Mammary epithelial cell (primary cell): ENCODE measurements at regions of chr6 and their contacts with region 1.

Region 1: DNA sequence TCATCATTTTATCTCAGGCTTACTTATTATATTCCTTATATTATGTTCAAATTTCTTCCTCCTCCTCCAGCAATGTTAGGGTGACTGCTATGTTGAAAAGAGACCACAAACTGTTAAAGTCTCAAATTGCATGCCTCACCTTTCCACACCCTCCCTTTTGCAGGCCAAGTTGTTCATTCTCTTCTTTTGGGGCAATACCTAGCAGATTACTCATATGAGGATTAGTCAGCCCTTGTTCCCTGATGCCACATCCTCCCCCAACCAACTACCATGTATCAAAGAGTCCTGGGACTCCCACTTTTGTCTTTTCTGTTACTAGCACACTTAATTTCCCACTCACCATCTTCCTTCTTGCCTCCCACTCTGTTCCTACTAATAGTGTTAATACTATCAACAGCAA is 434.7 kb downstream of the BCKDHB start:
- DNase-seq: peak; percentile 93
- H3K4me3 ChIP-seq: no peak overlapping the region
- H3K27ac ChIP-seq: peak overlapping the region; percentile 94
- H3K4me1 ChIP-seq: peaks cover 28% of the 10 kb centered on the region
- H3K27me3 ChIP-seq: no peaks in the 10 kb centered on the region
- CTCF ChIP-seq: no peak

Region 2: DNA sequence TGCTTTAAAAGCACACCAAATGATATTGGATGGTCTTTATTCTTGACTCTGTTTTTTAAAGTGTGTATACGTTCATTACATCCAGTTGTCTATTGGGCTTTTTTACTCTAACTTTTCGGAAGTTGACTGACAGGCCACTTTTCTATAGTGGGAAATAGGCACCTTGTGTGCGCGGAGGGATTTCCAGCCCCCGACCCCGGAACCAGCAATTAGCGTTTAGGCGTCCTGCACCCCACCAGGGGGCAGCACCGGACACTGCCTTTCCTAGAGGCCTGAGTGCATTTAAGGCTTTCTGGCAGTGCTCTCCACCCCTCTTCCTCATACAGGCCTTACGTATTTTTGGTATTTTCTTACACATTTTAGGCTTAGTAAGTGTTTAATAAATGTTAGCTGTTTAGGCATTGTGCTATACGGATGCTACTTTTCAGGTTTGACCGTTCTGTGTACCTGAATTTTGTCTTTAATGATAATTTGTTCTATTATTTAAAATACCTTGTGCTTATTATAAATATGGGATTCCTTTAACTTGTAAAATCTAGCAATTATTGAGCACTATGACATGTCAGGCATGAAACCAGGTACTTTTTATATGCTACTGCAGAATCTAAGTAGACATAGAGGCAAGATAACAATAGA is 202.9 kb before region 1 on chr6:
- CTCF ChIA-PET with region 1: no interaction called
- dilution Hi-C with region 1: no loop called
- in situ Hi-C with region 1: no loop called
- intact Hi-C with region 1: loop called (anchors 5 kb)
- DNase-seq: peak; percentile 29
- H3K4me3 ChIP-seq: no peak overlapping the region
- H3K27ac ChIP-seq: no peak overlapping the region
- H3K4me1 ChIP-seq: no peaks in the 10 kb centered on the region
- H3K27me3 ChIP-seq: no peaks in the 10 kb centered on the region
- CTCF ChIP-seq: peak; percentile 76 to 92

Region 3: DNA sequence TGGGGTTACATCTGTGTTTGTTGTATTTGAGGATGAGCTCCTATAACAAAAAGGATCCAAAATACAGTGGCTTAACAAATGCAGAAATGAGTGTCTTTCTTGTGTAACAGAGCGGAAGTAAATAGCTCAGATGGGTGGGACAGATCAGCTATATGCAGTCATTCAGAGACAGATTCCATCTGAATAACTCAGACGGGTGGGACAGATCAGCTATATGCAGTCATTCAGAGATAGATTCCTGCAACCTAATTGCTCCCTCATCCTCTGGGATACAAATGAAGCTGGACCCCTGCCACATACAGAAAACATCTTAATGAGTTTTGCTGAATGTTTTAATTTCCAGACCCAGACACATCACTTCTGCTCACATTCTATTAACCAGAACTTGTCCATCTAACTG is 102.4 kb before region 1 on chr6:
- CTCF ChIA-PET with region 1: no interaction called
- dilution Hi-C with region 1: no loop called
- in situ Hi-C with region 1: no loop called
- intact Hi-C with region 1: loop called (anchors 5 kb)
- DNase-seq: peak; percentile 83
- H3K4me3 ChIP-seq: no peak overlapping the region
- H3K27ac ChIP-seq: peak overlapping the region; percentile 97
- H3K4me1 ChIP-seq: peaks cover 26% of the 10 kb centered on the region
- H3K27me3 ChIP-seq: no peaks in the 10 kb centered on the region
- CTCF ChIP-seq: no peak

Region 4: DNA sequence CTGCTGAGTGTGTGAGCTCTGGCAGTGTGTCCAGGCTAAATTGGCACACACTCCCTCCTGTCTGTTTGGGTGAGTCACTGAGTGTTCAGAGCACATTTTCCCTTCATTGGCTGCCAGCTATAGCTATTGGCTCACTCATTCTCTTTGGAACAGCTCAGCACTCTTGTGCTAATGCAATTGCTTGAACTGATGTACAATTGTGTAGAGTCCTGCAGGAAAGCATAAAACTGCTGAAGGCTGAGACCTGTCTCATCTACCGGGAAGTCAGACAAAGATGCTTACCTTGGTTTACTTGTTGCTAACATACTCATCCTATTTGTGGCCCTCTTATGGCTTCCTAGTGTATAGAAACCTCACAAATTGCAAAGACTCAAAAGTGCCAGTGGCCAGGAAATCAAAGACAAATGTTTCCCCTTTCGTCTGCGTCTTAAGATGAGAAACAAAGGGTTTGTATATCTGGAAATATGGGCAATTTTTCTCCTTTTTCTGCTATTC is 83.7 kb before region 1 on chr6:
- CTCF ChIA-PET with region 1: no interaction called
- dilution Hi-C with region 1: loop called (anchors 5 kb)
- in situ Hi-C with region 1: no loop called
- intact Hi-C with region 1: no loop called
- DNase-seq: peak; percentile 94
- H3K4me3 ChIP-seq: no peak overlapping the region
- H3K27ac ChIP-seq: no peak overlapping the region
- H3K4me1 ChIP-seq: peaks cover 52% of the 10 kb centered on the region
- H3K27me3 ChIP-seq: no peaks in the 10 kb centered on the region
- CTCF ChIP-seq: no peak